A549 (cell line): ENCODE measurements at regions of chr11 and their contacts with region 1.

Region 1: GRCh38 chr11:8006349-8006977 is 19.3 kb downstream of the EIF3F start:
- DNase-seq: peak; percentile 66 to 71
- ATAC-seq: peak; percentile 91 to 97
- H3K4me3 ChIP-seq: no peak overlapping the region
- H3K27ac ChIP-seq: no peak overlapping the region
- H3K4me1 ChIP-seq: no peaks in the 10 kb centered on the region
- CTCF ChIP-seq: peak; percentile 92
- EP300 ChIP-seq: no peak
- POLR2A ChIP-seq: no peak
- RAD21 ChIP-seq: peak; percentile 92 to 96

Region 2: GRCh38 chr11:7882860-7883259 is 123.6 kb before region 1 on chr11:
- CTCF ChIA-PET with region 1: no interaction called
- POLR2A ChIA-PET with region 1: no interaction called
- DNase-seq: no peak
- ATAC-seq: no peak
- H3K4me3 ChIP-seq: no peak overlapping the region
- H3K27ac ChIP-seq: no peak overlapping the region
- H3K4me1 ChIP-seq: no peaks in the 10 kb centered on the region
- CTCF ChIP-seq: no peak
- EP300 ChIP-seq: no peak
- POLR2A ChIP-seq: no peak
- RAD21 ChIP-seq: no peak

Region 3: DNA sequence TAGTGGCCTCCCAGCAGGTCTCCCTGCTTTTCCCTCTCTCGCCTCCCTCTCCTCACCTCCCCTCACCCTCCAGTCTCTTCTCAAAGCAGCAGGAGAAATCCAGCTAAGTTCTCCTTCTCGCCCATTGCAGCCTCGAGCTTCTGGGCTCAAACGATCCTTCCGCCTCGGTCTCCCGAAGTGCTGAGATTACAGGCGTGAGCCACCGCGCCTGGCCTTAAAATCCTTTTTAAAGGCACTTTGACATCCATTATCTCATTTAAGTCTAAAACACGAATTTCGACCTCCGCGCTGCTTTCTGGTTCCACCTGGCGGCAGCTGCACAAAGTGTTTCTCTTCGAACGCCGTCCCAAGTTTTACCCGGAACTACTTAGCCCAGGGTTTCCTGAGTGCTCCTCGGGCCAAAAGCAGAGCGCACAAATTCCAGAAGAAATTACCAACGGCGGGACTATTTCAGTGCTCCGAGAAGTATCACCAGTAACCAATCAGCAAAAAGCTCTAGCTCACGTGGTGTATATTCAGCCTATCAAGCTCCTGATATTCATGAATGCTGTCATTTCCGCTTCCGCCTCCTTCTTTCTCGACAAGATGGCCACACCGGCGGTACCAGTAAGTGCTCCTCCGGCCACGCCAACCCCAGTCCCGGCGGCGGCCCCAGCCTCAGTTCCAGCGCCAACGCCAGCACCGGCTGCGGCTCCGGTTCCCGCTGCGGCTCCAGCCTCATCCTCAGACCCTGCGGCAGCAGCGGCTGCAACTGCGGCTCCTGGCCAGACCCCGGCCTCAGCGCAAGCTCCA is 19.5 kb before region 1 on chr11 and contains the start of gene EIF3F:
- CTCF ChIA-PET with region 1: interaction called, 39 read pairs
- POLR2A ChIA-PET with region 1: no interaction called
- DNase-seq: peak; percentile 97 to 100
- ATAC-seq: peak; percentile 98 to 99
- H3K4me3 ChIP-seq: peak within 1 kb of the TSS; percentile 70
- H3K27ac ChIP-seq: peak within 1 kb of the TSS; percentile 80 to 91
- H3K4me1 ChIP-seq: peaks cover 15% of the 10 kb centered on the region
- CTCF ChIP-seq: peak; percentile 94
- EP300 ChIP-seq: no peak
- POLR2A ChIP-seq: peak; percentile 45
- RAD21 ChIP-seq: peak; percentile 78 to 87
- polyA plus RNA-seq, gene EIF3F: 119 and 191 TPM in 2 replicates

Region 4: GRCh38 chr11:8018484-8019313 is 12.2 kb after region 1 on chr11:
- CTCF ChIA-PET with region 1: interaction called, 112 read pairs
- POLR2A ChIA-PET with region 1: no interaction called
- DNase-seq: peak; percentile 32 to 51
- ATAC-seq: peak; percentile 75 to 83
- H3K4me3 ChIP-seq: peak overlapping the region; percentile 61
- H3K27ac ChIP-seq: peak overlapping the region in 1 of 2 experiments; percentile 71; a peak in 3 of 6 replicates
- H3K4me1 ChIP-seq: no peaks in the 10 kb centered on the region; the same call in 2 of the 3 replicates
- CTCF ChIP-seq: no peak
- EP300 ChIP-seq: no peak
- POLR2A ChIP-seq: no peak
- RAD21 ChIP-seq: no peak

Region 5: DNA sequence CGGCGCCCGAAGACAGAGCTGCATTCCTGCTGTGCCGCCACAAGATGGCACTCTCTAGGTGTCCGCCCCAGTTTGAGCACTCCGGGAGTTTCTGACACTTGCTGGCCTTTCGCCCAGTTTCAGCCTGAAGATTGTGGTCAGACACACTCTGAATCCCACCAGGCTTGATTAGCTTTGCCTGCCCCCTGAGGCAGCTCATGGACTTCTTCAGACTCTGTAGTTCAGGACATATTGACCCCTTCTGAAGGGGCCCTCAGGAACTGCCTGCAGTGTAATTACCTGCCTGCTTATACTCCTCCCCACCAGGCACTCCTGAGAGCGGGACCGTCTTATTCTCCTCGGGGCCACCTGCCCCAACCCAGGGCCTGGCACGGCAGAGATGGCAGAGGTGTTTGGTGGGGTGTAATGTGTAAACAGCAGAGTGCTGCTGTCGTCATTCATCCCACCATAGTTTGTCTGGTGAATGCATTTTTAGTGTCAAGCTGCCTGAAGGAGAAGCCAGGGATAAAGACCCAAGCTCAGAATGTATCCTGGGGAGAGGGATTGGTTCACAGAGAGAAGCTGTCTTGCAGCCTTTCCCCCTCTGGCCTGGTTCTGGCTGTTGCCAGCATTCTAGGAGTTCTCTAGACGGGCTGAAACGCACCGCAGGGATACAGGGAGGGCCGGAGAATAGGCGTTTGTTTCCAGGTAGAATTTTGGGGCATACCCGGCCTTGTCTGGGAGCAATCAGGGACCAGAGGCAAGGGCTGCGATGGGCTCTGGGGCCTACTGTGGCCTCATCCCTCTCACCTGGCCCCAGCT is 27.0 kb after region 1 on chr11:
- CTCF ChIA-PET with region 1: interaction called, 103 read pairs
- POLR2A ChIA-PET with region 1: no interaction called
- DNase-seq: peak; percentile 58 to 70
- ATAC-seq: peak; percentile 70 to 92; a peak in 5 of 6 replicates
- H3K4me3 ChIP-seq: no peak overlapping the region
- H3K27ac ChIP-seq: no peak overlapping the region
- H3K4me1 ChIP-seq: no peaks in the 10 kb centered on the region
- CTCF ChIP-seq: peak; percentile 84
- EP300 ChIP-seq: no peak
- POLR2A ChIP-seq: no peak
- RAD21 ChIP-seq: peak; percentile 74 to 79

Region 6: DNA sequence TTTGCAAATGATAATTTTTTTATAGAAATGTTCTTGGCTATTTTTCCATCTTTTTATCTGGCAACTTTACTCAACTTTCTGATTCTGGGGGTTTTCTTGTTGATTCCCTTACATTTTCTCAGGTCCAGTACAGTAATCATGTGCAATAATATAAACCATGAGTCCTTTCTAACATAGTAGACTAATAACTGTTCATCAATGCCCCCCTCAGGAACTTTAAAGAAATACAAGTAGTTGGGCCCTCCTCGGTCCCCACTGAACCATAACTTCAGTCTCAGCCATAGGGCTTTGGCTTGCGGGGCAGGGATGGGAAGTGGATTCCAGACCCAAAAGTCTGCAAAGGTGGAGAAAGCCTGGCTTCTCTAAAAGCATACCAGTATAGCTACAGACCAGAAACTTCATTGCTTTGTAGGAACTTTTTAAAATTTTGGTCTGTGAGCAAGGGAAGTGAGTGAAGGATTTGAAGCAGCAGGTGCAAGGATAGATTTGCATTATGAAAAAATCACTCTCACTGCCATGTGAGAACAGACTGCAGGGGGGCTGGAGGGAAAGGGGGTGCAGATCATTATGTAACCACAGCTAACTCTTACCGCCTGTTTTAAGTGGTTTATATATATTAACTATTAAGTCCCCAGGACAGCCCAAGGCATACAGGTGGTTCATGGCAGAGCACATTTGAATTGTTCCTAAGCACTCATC is 64.1 kb after region 1 on chr11:
- CTCF ChIA-PET with region 1: interaction called, 23 read pairs
- POLR2A ChIA-PET with region 1: no interaction called
- DNase-seq: peak; percentile 34 to 84
- ATAC-seq: peak; percentile 65 to 82
- H3K4me3 ChIP-seq: no peak overlapping the region
- H3K27ac ChIP-seq: no peak overlapping the region
- H3K4me1 ChIP-seq: peaks cover 18% of the 10 kb centered on the region
- CTCF ChIP-seq: peak; percentile 28
- EP300 ChIP-seq: no peak
- POLR2A ChIP-seq: no peak
- RAD21 ChIP-seq: peak; percentile 44 to 52

Region 7: DNA sequence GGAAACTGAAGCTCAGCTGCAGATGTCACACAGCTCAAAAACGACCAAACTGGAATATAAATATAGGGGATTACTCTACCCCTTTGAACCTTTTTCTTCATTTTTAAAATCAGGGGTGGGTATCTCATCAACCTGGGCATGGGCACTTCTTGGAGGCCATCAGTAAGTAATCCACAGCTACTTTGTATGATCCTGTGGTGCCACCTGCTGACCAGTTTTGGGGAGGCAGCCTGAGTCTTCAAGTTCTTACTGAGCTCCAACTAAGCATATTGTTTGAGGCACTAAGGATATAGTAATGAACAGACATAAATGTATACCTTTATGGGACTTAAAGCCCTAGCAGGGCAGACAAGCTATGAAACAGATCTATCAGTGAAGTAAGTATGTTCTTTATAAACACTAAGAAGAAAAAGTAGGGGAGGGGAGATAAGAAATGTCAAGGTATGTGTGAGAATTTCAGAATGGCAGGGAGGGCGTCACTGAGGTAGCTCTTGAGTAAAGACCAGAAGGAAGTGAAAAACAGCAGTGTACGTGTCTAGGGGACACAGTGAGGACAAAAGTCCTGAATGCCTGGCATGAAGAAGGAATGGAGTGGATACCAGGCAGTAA is 92.9 kb after region 1 on chr11:
- CTCF ChIA-PET with region 1: interaction called, 626 read pairs
- POLR2A ChIA-PET with region 1: interaction called, 5 read pairs
- DNase-seq: peak; percentile 56 to 80
- ATAC-seq: peak; percentile 82 to 92
- H3K4me3 ChIP-seq: no peak overlapping the region
- H3K27ac ChIP-seq: no peak overlapping the region
- H3K4me1 ChIP-seq: no peaks in the 10 kb centered on the region
- CTCF ChIP-seq: peak; percentile 85
- EP300 ChIP-seq: no peak
- POLR2A ChIP-seq: no peak
- RAD21 ChIP-seq: peak; percentile 86